ENCODE measurements at regions of chr9 and their contacts with region 1.

Region 1: GRCh38 chr9:126532019-126532462 is 81.7 kb upstream of the LMX1B start:
- DNase-seq: no peak
- H3K4me3 ChIP-seq: no peak overlapping the region
- H3K27ac ChIP-seq: no peak overlapping the region
- H3K4me1 ChIP-seq: peaks cover 14 to 38% (median 19%) of the 10 kb centered on the region in 4 experiments
- H3K27me3 ChIP-seq: peaks cover 0 to 8% (median 5%) of the 10 kb centered on the region in 4 experiments; a peak in 5 of 7 replicates
- CTCF ChIP-seq: no peak
- EP300 ChIP-seq: no peak
- POLR2A ChIP-seq: no peak
- RAD21 ChIP-seq: no peak

Region 2: GRCh38 chr9:126448865-126449537 is 83.0 kb before region 1 on chr9:
- CTCF ChIA-PET with region 1: no interaction called
- POLR2A ChIA-PET with region 1: no interaction called
- DNase-seq: no peak
- H3K4me3 ChIP-seq: no peak overlapping the region
- H3K27ac ChIP-seq: no peak overlapping the region
- H3K4me1 ChIP-seq: peaks cover 0 to 4% (median 0%) of the 10 kb centered on the region in 4 experiments; a peak in 2 of 7 replicates
- H3K27me3 ChIP-seq: no peaks in the 10 kb centered on the region
- CTCF ChIP-seq: peak in 2 of 3 experiments; percentile 1 to 12; a peak in 1 of 4 replicates
- EP300 ChIP-seq: no peak
- POLR2A ChIP-seq: no peak
- RAD21 ChIP-seq: no peak

Region 3: GRCh38 chr9:126558051-126558665 is 26.1 kb after region 1 on chr9:
- CTCF ChIA-PET with region 1: interaction called, 343 read pairs
- POLR2A ChIA-PET with region 1: interaction called, 3 read pairs
- DNase-seq: peak; percentile 29 to 93
- H3K4me3 ChIP-seq: no peak overlapping the region
- H3K27ac ChIP-seq: no peak overlapping the region
- H3K4me1 ChIP-seq: peaks cover 0 to 2% (median 0%) of the 10 kb centered on the region in 4 experiments; a peak in 2 of 7 replicates
- H3K27me3 ChIP-seq: no peaks in the 10 kb centered on the region; a peak in 1 of 7 replicates
- CTCF ChIP-seq: peak; percentile 98 to 99 (median 98)
- EP300 ChIP-seq: no peak
- POLR2A ChIP-seq: no peak
- RAD21 ChIP-seq: peak; percentile 96 to 98

Region 4: GRCh38 chr9:126696381-126697145 is 164.5 kb after region 1 on chr9:
- CTCF ChIA-PET with region 1: no interaction called
- POLR2A ChIA-PET with region 1: no interaction called
- DNase-seq: no peak
- H3K4me3 ChIP-seq: no peak overlapping the region
- H3K27ac ChIP-seq: no peak overlapping the region
- H3K4me1 ChIP-seq: peaks cover 0 to 4% (median 0%) of the 10 kb centered on the region in 4 experiments; a peak in 2 of 7 replicates
- H3K27me3 ChIP-seq: peaks cover 0 to under 1% (median 0%) of the 10 kb centered on the region in 4 experiments; a peak in 2 of 7 replicates
- CTCF ChIP-seq: no peak
- EP300 ChIP-seq: no peak
- POLR2A ChIP-seq: no peak
- RAD21 ChIP-seq: no peak